Activated CD4-positive, alpha-beta memory T cell treated with anti-CD3 and anti-CD28 coated beads, Interleukin-2, amount 10 ng/mL, durations not matched to agents 7 days and 5 days (primary cell): ENCODE measurements at regions of chr1 and their contacts with region 1.

Region 1: DNA sequence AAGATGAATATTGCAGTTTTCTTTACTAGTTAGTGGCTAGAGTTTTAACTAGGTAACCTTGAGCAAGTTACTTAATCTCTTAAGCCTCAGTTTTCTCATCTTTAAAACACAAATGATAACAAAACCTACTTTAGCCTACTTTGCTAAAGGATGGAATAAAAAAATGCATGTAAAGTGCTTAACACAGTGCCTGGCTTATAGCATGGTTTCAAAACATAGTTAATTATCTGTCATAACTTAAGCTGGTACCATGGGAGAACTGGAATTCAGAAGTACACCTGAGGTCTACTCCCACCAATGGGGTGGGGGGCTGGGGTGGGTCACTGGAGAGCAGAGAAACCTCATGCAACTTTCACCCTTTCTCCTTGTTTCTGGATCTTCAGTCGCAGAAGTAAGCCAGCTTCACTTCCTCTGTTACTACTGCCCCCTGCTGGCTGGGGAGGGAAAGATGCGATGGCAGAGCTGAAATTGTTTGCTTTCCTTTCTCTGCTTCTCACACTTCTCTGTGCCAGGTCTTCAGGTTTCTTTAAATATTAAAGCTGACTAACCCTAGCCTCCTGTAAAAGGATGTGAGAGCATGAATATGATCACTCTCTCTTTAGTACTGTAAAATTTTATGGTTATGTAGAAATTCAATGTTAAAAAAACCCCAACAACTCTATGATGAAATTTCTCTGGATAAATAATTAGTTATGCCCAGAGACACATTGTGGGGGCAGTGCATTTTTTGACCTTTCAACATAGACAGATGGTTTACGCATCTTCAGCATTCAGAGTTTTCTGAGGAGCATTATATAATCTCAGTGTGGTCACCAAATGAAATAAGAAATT is 324.2 kb downstream of the HLX start:
- DNase-seq: peak; percentile 68
- H3K4me3 Mint-ChIP-seq: no peak overlapping the region
- H3K27ac Mint-ChIP-seq: no peak overlapping the region
- H3K4me1 Mint-ChIP-seq: peaks cover 4% of the 10 kb centered on the region
- H3K27me3 Mint-ChIP-seq: no peaks in the 10 kb centered on the region

Region 2: GRCh38 chr1:220873868-220874655 is 329.4 kb before region 1 on chr1:
- CTCF ChIA-PET with region 1: interaction called, 12 read pairs
- POLR2A ChIA-PET with region 1: no interaction called
- DNase-seq: no peak
- H3K4me3 Mint-ChIP-seq: no peak overlapping the region
- H3K27ac Mint-ChIP-seq: no peak overlapping the region
- H3K4me1 Mint-ChIP-seq: peaks cover 23% of the 10 kb centered on the region
- H3K27me3 Mint-ChIP-seq: peaks cover 63% of the 10 kb centered on the region

Region 3: DNA sequence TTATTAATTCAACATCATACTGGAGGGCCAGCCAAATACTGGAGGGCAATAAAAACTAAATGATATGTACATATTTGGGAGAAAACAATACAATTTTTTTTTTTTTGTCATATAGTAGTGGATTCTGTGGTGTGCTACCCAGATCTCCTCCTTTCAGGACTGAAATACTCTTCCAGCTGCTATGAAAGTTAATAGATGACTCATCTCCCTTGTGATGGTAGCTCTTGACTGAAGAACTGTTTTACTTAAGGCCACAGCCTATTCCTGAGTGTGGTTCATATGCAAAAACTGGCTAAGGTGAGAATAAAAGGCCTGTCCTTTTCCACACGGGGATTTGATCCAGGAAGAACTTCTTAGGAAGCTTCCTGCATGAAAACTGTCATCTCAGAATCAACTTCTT is 16.3 kb before region 1 on chr1:
- CTCF ChIA-PET with region 1: interaction called, 14 read pairs
- POLR2A ChIA-PET with region 1: no interaction called
- DNase-seq: no peak
- H3K4me3 Mint-ChIP-seq: no peak overlapping the region
- H3K27ac Mint-ChIP-seq: no peak overlapping the region
- H3K4me1 Mint-ChIP-seq: no peaks in the 10 kb centered on the region
- H3K27me3 Mint-ChIP-seq: no peaks in the 10 kb centered on the region

Region 4: GRCh38 chr1:221284028-221284427 is 80.6 kb after region 1 on chr1:
- CTCF ChIA-PET with region 1: no interaction called
- POLR2A ChIA-PET with region 1: no interaction called
- DNase-seq: no peak
- H3K4me3 Mint-ChIP-seq: no peak overlapping the region
- H3K27ac Mint-ChIP-seq: no peak overlapping the region
- H3K4me1 Mint-ChIP-seq: no peaks in the 10 kb centered on the region
- H3K27me3 Mint-ChIP-seq: no peaks in the 10 kb centered on the region